Endothelial cell of umbilical vein (primary cell): ENCODE measurements at regions of chr1 and their contacts with region 1.

Region 1: DNA sequence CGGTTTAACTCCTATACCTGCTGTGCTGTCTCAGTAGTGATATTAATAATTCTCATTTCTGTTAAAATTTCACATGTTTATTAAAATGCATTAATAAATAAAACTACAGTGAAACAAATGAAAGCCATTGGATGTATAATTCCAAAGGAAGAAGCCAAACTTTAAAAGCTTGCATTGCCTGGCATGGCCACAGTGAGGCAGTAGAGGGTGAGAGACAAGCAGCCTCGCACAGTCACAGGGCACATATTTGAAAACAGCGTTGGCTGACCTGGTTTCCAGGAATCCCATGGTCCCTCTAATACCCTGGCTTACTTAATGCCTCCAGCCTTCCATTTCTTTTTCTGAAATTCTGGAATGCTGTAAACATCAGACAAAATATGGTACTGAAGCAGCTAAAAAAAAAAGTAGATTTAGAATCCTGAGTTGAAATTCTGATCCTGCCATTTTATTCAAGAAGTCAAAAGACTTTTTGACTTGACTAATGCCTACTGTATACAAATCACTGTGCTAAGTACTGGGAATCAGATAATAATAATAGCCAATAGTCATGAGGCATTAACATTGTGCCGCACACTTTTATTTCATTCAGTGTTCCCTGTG is 6.7 kb upstream of the RNASEL start:
- DNase-seq: peak; percentile 60
- H3K4me3 ChIP-seq: no peak overlapping the region
- H3K27ac ChIP-seq: no peak overlapping the region
- H3K4me1 ChIP-seq: no peaks in the 10 kb centered on the region
- H3K27me3 ChIP-seq: peaks cover 4 to 13% of the 10 kb centered on the region in 2 experiments
- CTCF ChIP-seq: peak; percentile 85 to 88
- POLR2A ChIP-seq: no peak

Region 2: GRCh38 chr1:182446033-182446669 is 149.6 kb before region 1 on chr1:
- CTCF ChIA-PET with region 1: no interaction called
- POLR2A ChIA-PET with region 1: no interaction called
- dilution Hi-C with region 1: no loop called
- intact Hi-C with region 1: loop called (anchors 5 kb)
- DNase-seq: peak; percentile 38
- H3K4me3 ChIP-seq: no peak overlapping the region
- H3K27ac ChIP-seq: no peak overlapping the region
- H3K4me1 ChIP-seq: no peaks in the 10 kb centered on the region
- H3K27me3 ChIP-seq: no peaks in the 10 kb centered on the region
- CTCF ChIP-seq: peak; percentile 48 to 55
- POLR2A ChIP-seq: no peak

Region 3: DNA sequence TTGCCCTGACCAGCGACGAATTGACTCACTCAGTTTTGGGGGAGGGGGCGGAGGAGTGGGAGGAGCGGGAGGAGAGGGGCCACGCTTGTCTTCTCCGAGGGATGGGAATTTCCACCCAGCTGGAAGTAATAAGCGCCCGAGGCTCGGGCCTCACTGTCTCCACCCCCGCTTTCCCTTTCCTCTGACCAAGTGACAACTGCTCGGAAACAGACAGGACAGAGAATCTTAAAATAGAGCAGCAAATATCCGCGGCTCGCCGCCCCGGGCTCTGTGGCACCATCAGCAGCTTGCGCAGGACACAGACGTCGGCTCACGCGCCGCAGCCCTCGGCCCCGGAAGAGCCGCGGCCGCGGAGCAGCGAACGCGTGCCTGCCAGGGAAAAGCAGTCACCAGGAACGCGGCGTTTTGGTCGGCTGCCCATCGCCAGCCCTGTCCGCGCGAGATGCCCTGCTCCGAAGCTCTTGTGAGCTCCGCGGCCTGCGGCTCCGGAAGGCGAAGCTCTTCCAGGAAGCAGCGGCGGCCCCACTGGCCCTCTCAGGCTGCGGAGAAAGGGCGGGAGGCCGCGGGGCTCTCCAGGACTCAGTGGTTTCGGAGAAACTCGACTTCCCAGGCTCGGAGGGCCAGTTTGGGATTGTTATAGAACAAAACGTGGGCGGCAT is 19.2 kb after region 1 on chr1:
- CTCF ChIA-PET with region 1: interaction called, 31 read pairs
- POLR2A ChIA-PET with region 1: no interaction called
- dilution Hi-C with region 1: no loop called
- intact Hi-C with region 1: no loop called
- DNase-seq: peak; percentile 55
- H3K4me3 ChIP-seq: peak overlapping the region; percentile 38 to 46 (median 39)
- H3K27ac ChIP-seq: no peak overlapping the region
- H3K4me1 ChIP-seq: peaks cover 11% of the 10 kb centered on the region
- H3K27me3 ChIP-seq: peaks cover 56 to 63% of the 10 kb centered on the region in 2 experiments
- CTCF ChIP-seq: no peak
- POLR2A ChIP-seq: no peak